ENCODE measurements at regions of chr7 and their contacts with region 1.

Region 1: DNA sequence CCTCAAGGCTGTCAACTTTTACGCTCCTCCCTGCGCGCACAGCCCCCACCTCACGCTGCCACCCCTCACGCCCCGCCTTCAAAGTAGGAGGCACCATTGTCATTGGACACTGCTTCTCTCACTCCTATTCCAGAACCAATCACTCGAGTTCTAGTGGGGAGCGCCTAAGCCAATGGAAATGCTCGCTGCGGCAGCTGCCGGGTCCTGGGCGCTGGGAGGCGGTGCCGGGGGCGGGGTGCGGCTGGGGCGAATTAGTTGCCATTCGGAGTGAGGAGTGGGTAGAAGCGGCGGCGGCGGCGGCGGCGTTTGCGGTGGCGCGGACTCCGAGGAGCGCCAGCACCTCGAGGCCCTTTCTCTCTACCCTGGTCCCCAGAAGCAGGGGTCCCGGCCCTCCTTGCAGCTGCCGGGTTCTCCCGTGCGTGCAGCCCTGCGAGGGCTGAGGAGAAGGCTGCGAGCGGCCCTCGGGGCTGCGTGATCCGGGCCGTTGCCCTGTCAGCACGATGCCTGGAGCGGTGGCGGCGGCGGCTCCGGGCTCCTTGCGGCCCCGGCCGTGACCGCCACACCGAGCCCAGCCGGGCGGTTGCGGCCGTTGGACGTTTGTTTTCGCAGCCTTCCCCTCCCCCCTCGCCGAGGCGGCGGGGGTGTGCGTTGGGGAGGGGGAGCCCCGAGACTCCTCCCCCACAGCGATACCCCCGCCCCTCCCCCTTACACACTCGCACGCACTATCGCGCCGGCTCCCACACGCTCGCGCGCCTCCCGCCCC is at the start of gene GLCCI1:
- DNase-seq: peak; percentile 95 to 98
- ATAC-seq: peak; percentile 85 to 95 (median 88)
- H3K4me3 ChIP-seq: peak within 1 kb of the TSS; percentile 93
- H3K4me3 Mint-ChIP-seq: peak within 1 kb of the TSS; percentile 97
- H3K27ac ChIP-seq: peak within 1 kb of the TSS; percentile 88
- H3K27ac Mint-ChIP-seq: peak within 1 kb of the TSS in 1 of 2 donors; percentile 96
- H3K4me1 ChIP-seq: peaks cover 6% of the 10 kb centered on the region
- H3K4me1 Mint-ChIP-seq: peaks cover 14 to 22% of the 10 kb centered on the region in 2 donors
- H3K27me3 ChIP-seq: no peaks in the 10 kb centered on the region
- H3K27me3 Mint-ChIP-seq: no peaks in the 10 kb centered on the region
- CTCF ChIP-seq: no peak
- total RNA-seq, gene GLCCI1: 70.5 to 132 (median 79.6) TPM

Region 2: DNA sequence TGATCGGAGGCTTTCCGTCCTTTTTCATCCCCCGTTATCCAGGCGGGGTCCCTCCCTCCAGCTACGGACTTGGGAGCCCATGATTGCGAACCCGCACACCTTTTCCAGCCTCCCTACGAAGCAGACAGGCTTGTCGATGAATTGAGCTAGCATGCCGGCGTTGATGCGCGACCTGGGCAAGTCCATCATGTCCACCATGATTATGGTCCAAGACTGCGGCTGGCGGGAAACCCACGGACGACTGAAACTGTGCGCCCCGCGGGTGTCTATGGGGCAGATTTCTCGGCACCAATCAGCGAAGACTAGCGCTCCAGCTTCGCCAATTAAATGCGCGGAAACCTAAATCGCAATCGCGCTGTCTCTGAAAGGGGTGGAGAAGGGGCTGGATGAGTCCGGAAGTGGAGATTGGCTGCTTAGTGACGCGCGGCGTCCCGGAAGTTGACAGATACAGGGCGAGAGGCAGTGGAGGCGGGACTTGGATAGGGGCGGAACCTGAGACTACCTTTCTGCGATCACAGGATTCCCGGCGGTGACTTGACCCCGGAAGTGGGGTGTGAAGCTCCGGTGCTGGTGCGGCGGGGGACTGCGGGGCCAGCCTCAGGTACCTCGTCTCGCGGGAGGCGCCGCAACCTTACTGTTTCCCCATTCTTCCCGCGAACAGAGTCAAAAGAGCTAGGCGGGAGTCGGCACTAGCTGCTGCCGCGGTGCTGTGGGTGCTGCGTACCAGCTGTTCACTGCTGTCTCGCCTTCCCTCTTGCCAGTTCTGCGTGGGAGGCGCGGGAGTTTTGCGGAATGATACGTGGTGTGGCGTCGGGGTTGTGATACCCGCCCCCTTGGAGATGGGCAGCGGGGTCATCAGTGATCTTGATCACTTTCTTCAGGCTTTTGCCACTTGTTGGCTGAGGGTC is 328.2 kb before region 1 on chr7 and contains the start of gene UMAD1:
- intact Hi-C with region 1: loop called (anchors 5 kb)
- DNase-seq: peak; percentile 96 to 99
- ATAC-seq: peak; percentile 92 to 99 (median 95)
- H3K4me3 ChIP-seq: peak within 1 kb of the TSS; percentile 77
- H3K4me3 Mint-ChIP-seq: peak within 1 kb of the TSS; percentile 93
- H3K27ac ChIP-seq: peak within 1 kb of the TSS; percentile 90
- H3K27ac Mint-ChIP-seq: peak within 1 kb of the TSS; percentile 94 to 98
- H3K4me1 ChIP-seq: peaks cover 11% of the 10 kb centered on the region
- H3K4me1 Mint-ChIP-seq: peaks cover 26 to 42% of the 10 kb centered on the region in 2 donors
- H3K27me3 ChIP-seq: no peaks in the 10 kb centered on the region
- H3K27me3 Mint-ChIP-seq: no peaks in the 10 kb centered on the region
- CTCF ChIP-seq: no peak
- total RNA-seq, gene UMAD1: 12.3 to 16.5 (median 14.6) TPM

Region 3: DNA sequence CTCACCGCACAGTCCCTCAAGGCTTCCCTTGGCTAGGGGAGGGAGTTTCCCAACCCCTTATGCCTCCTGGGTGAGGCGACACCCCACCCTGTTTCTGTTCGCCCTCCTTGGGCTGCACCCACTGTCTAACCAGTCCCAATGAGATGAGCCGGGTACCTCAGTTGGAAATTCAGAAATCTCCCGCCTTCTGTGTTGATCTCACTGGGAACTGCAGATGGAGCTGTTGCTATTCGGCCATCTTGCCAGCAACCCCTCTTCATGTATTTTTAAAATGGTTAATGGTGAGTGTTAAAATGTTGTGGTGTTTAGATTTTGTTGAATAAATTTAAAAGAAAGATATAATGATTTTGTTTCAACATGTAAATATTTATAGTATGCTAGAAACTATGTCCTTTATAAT is 306.2 kb before region 1 on chr7:
- intact Hi-C with region 1: no loop called
- DNase-seq: peak in 1 of 2 donors; percentile 13
- ATAC-seq: no peak
- H3K4me3 ChIP-seq: no peak overlapping the region
- H3K4me3 Mint-ChIP-seq: no peak overlapping the region
- H3K27ac ChIP-seq: no peak overlapping the region
- H3K27ac Mint-ChIP-seq: no peak overlapping the region
- H3K4me1 ChIP-seq: no peaks in the 10 kb centered on the region
- H3K4me1 Mint-ChIP-seq: peaks cover 35 to 37% of the 10 kb centered on the region in 2 donors
- H3K27me3 ChIP-seq: no peaks in the 10 kb centered on the region
- H3K27me3 Mint-ChIP-seq: no peaks in the 10 kb centered on the region
- CTCF ChIP-seq: no peak

Region 4: DNA sequence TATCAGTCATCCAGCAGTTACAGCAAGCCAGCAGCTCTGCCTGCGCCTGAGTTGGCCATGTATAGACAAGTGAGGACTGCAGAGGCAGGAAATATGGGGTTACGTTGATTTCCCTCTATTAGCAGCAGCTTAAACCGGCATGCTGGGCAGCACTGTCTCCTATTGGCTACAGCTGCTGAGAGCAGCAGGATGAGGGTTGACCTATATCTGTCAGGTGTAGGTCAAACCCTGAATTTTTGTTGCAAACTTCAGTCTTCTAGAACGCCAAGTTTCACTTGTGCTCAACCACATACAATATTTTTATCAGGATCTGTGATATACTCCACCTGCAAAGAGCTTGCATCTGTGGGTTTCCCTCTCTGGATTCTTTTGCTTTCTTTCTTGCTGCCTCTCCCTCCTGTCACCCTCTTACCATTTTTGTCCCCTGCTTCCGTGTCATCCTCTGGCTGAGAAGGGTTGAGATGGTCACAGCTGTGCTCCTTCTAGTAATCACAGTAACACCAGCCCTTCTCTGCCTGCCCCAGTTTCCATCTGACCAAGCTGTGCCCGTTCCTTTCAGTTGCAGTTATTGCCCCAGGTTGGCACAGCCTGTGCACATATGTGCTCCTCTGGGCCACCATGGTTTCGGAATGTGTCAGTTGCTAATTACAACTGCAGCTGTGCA is 24.0 kb before region 1 on chr7:
- intact Hi-C with region 1: loop called (anchors 1 kb)
- DNase-seq: peak; percentile 19 to 77
- ATAC-seq: peak; percentile 79 to 85 (median 82)
- H3K4me3 ChIP-seq: peak overlapping the region; percentile 21
- H3K4me3 Mint-ChIP-seq: peak overlapping the region; percentile 73
- H3K27ac ChIP-seq: peak overlapping the region; percentile 71
- H3K27ac Mint-ChIP-seq: peak overlapping the region; percentile 81 to 86
- H3K4me1 ChIP-seq: peaks cover 26% of the 10 kb centered on the region
- H3K4me1 Mint-ChIP-seq: peaks cover 51 to 53% of the 10 kb centered on the region in 2 donors
- H3K27me3 ChIP-seq: no peaks in the 10 kb centered on the region
- H3K27me3 Mint-ChIP-seq: no peaks in the 10 kb centered on the region
- CTCF ChIP-seq: no peak

Region 5: DNA sequence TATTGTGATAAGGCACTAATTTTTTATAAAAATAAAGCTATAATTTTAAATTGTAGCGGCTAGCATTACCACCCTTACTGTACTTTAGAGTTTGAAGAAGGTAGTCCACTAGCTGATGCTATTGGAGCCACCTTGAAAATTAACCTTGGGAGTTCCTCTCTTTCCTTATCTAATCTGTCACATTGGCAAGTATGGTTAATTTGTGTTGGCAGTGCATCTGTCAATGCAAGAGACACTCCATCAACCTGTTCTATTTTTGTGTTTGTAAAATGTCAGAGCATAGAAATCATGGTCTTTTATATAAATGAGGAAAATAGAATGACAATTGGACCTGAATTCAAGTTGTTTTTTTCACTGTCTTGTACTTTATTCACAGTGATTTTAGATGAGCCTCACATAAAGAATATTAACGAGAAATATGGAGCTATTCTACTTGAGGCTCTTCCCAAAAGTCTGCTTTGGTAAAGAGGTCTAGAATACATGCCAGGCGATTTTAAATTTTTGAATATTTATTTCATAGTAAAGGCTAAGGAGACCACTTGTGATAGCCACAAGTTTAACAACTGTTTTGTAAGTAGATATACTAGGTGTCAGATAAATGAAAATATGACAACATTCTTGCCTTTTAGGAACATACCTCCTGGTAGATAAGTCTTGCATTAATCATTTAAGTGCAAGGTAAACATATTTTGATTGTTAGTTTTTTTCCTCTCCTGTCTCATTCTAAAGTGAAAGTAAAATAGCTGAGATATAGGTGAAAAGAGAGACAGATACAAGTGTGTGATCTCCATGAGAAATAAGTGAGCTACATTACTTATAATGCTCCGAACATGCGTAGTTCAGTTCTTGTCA is 20.6 kb after region 1 on chr7:
- intact Hi-C with region 1: loop called (anchors 2 kb)
- DNase-seq: peak in 1 of 2 donors; percentile 30
- ATAC-seq: peak; percentile 64 to 77 (median 68)
- H3K4me3 ChIP-seq: peak overlapping the region; percentile 4
- H3K4me3 Mint-ChIP-seq: peak overlapping the region; percentile 84
- H3K27ac ChIP-seq: peak overlapping the region; percentile 61
- H3K27ac Mint-ChIP-seq: peak overlapping the region; percentile 86 to 90
- H3K4me1 ChIP-seq: peaks cover 4% of the 10 kb centered on the region
- H3K4me1 Mint-ChIP-seq: peaks cover 47 to 70% of the 10 kb centered on the region in 2 donors
- H3K27me3 ChIP-seq: no peaks in the 10 kb centered on the region
- H3K27me3 Mint-ChIP-seq: no peaks in the 10 kb centered on the region
- CTCF ChIP-seq: no peak

Region 6: GRCh38 chr7:8015100-8015748 is 46.5 kb after region 1 on chr7:
- intact Hi-C with region 1: loop called (anchors 2 kb)
- DNase-seq: peak in 1 of 2 donors; percentile 63
- ATAC-seq: peak; percentile 84 to 90 (median 86)
- H3K4me3 ChIP-seq: peak overlapping the region; percentile 18
- H3K4me3 Mint-ChIP-seq: peak overlapping the region; percentile 87
- H3K27ac ChIP-seq: peak overlapping the region; percentile 78
- H3K27ac Mint-ChIP-seq: peak overlapping the region; percentile 87 to 93
- H3K4me1 ChIP-seq: peaks cover 11% of the 10 kb centered on the region
- H3K4me1 Mint-ChIP-seq: peaks cover 50 to 61% of the 10 kb centered on the region in 2 donors
- H3K27me3 ChIP-seq: no peaks in the 10 kb centered on the region
- H3K27me3 Mint-ChIP-seq: no peaks in the 10 kb centered on the region
- CTCF ChIP-seq: no peak

Region 7: GRCh38 chr7:8035647-8036518 is 67.2 kb after region 1 on chr7:
- intact Hi-C with region 1: loop called (anchors 5 kb)
- DNase-seq: peak in 1 of 2 donors; percentile 68
- ATAC-seq: peak; percentile 92 to 99 (median 97)
- H3K4me3 ChIP-seq: no peak overlapping the region
- H3K4me3 Mint-ChIP-seq: no peak overlapping the region
- H3K27ac ChIP-seq: peak overlapping the region; percentile 6
- H3K27ac Mint-ChIP-seq: peak overlapping the region; percentile 46 to 82
- H3K4me1 ChIP-seq: peaks cover 15% of the 10 kb centered on the region
- H3K4me1 Mint-ChIP-seq: peaks cover 28 to 34% of the 10 kb centered on the region in 2 donors
- H3K27me3 ChIP-seq: no peaks in the 10 kb centered on the region
- H3K27me3 Mint-ChIP-seq: no peaks in the 10 kb centered on the region
- CTCF ChIP-seq: peak; percentile 79